ENCODE measurements at regions of chr17 and their contacts with region 1.

Region 1: GRCh38 chr17:77734341-77735080 is 224.0 kb upstream of the TNRC6C start:
- DNase-seq: peak; percentile 94 to 98 (median 97)
- ATAC-seq: peak; percentile 76 to 79
- H3K4me3 ChIP-seq: no peak overlapping the region
- H3K27ac ChIP-seq: peak overlapping the region; percentile 82
- H3K4me1 ChIP-seq: peaks cover 8% of the 10 kb centered on the region
- H3K27me3 ChIP-seq: no peaks in the 10 kb centered on the region

Region 2: GRCh38 chr17:77609553-77610517 is 124.7 kb before region 1 on chr17:
- intact Hi-C with region 1: loop called in 1 of 4 experiments (anchors 10 kb)
- DNase-seq: no peak
- ATAC-seq: no peak
- H3K4me3 ChIP-seq: no peak overlapping the region
- H3K27ac ChIP-seq: no peak overlapping the region
- H3K4me1 ChIP-seq: no peaks in the 10 kb centered on the region
- H3K27me3 ChIP-seq: no peaks in the 10 kb centered on the region

Measured in right cardiac atrium (tissue), 5 donors.